PC-9 (cell line): ENCODE measurements at regions of chr10 and their contacts with region 1.

Region 1: DNA sequence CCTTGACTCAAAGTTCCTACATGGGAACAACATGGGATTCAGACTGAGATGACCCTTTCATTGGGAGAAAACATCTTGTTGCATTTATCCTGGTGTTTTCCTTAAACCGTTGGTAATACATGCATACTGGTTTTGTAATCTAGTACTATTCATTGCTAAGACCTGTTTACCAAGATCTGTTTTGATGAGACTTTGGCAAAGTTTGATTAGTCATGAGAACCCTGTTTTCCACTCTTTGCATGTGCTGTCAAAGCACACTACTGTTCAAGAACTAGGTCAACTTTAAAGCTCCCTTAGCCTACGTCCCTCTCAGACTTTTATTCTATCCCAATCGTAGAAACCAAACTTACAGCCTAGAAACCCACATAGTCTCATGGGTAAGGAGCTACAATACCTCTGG is 650.9 kb downstream of the GATA3 start:
- DNase-seq: no peak
- H3K4me3 ChIP-seq: no peak overlapping the region
- H3K27ac ChIP-seq: no peak overlapping the region
- H3K4me1 ChIP-seq: peaks cover 36% of the 10 kb centered on the region
- H3K27me3 ChIP-seq: no peaks in the 10 kb centered on the region
- CTCF ChIP-seq: no peak

Region 2: DNA sequence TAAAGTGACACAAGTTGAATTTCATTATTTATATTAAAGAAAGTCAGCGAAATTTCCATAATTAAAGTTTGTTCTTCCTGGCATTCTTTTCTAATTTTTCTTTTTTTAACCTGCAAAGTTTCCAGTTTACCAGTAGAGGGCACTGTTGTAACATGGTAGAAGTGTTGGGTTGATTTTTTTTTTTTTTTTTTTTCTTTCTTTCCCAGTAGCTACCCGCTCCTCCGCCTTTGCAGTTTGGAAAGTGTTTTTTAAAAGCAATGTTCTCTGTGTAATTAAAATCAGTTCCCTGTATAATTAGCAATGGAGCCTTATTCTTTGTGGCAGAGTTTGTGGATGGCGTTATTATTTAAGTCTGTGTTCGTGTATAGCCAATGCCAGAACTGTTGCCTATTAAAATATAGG is 833.4 kb before region 1 on chr10:
- CTCF ChIA-PET with region 1: interaction called, 3 read pairs
- POLR2A ChIA-PET with region 1: no interaction called
- intact Hi-C with region 1: loop called (anchors 10 kb)
- DNase-seq: peak in 1 of 2 experiments; percentile 5
- H3K4me3 ChIP-seq: peak overlapping the region; percentile 54; the same call in 1 of the 2 replicates
- H3K27ac ChIP-seq: no peak overlapping the region
- H3K4me1 ChIP-seq: peaks cover 8% of the 10 kb centered on the region
- H3K27me3 ChIP-seq: no peaks in the 10 kb centered on the region
- CTCF ChIP-seq: peak; percentile 74

Region 3: DNA sequence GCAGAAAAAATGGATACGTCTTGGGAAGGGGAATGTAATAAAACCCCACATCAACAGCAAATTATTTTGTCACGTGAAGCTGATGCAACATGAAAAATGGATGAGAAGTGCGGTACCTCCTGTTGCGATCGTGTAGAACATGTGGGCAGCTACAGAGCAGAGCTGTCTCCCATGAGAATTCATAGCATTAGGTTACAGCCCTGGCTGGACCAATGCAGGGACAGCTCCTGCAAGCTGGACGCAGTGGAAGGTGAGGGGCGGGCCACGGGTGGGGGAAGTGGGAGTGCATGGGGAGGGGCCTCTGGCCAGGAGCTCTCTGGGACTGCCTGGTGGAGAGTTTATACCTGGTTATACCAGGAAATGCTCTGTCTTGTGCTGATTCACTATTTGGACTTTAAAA is 530.6 kb before region 1 on chr10:
- CTCF ChIA-PET with region 1: no interaction called
- POLR2A ChIA-PET with region 1: no interaction called
- intact Hi-C with region 1: no loop called
- DNase-seq: no peak
- H3K4me3 ChIP-seq: no peak overlapping the region
- H3K27ac ChIP-seq: no peak overlapping the region
- H3K4me1 ChIP-seq: no peaks in the 10 kb centered on the region
- H3K27me3 ChIP-seq: no peaks in the 10 kb centered on the region
- CTCF ChIP-seq: no peak

Region 4: DNA sequence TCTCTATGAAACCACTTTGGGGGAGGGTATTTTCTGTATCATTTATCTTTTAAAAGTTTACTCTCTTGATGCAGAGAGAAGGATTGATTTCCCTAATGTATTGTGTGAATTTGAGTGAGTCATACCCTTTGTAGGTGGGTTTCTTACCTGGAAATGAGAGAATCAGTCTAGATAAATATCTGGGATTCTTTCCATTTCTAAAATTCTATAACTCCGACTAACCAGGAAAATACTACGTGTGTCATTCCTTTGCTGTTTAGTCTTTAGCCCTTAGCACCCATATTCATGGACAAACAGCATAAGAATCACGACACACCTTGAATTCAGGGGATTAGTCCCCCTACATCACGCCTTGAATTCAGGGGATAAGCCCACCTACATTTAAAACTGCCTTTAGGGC is 511.9 kb before region 1 on chr10:
- CTCF ChIA-PET with region 1: no interaction called
- POLR2A ChIA-PET with region 1: no interaction called
- intact Hi-C with region 1: loop called (anchors 10 kb)
- DNase-seq: peak; percentile 37 to 93
- H3K4me3 ChIP-seq: peak overlapping the region; percentile 52; the same call in 1 of the 2 replicates
- H3K27ac ChIP-seq: peak overlapping the region; percentile 99
- H3K4me1 ChIP-seq: peaks cover 32% of the 10 kb centered on the region
- H3K27me3 ChIP-seq: no peaks in the 10 kb centered on the region
- CTCF ChIP-seq: no peak

Region 5: DNA sequence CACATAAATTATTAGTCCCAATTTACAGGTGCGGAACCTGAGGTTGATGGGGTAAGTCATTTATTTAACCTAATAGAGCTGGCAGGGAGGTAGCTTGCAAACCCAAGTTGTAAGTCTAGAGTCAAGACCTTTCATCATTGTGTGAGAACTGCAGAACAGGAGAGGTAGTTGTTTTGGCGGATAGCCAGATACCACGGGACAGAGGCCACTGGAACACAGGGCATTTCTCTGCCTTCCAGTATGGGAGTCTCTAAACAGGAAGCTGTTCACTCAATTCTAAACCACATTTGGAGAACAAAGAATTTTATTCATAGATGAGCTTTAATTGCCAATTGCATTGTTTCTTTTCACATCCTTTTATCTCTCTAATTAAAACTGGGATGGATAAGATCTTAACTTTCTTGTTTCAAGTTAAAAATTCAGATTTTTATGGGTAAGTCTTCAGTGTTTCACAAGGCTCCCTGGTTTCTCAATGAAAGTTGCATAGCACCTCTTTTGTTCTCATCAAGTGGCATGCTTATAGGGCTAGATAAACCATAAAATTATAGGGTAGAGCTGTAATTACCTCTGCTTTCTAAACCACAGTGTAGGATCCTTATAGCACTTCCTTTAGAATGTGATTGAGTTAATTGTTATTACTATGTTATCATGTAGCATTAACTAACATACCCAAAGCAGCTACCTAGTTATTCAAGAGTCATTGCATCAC is 161.9 kb before region 1 on chr10:
- CTCF ChIA-PET with region 1: no interaction called
- POLR2A ChIA-PET with region 1: no interaction called
- intact Hi-C with region 1: loop called (anchors 2 kb)
- DNase-seq: peak; percentile 68 to 85
- H3K4me3 ChIP-seq: no peak overlapping the region; the same call in 1 of the 2 replicates
- H3K27ac ChIP-seq: peak overlapping the region; percentile 99
- H3K4me1 ChIP-seq: peaks cover 39% of the 10 kb centered on the region
- H3K27me3 ChIP-seq: no peaks in the 10 kb centered on the region
- CTCF ChIP-seq: no peak

Region 6: GRCh38 chr10:8628186-8628759 is 77.1 kb before region 1 on chr10:
- CTCF ChIA-PET with region 1: no interaction called
- POLR2A ChIA-PET with region 1: no interaction called
- intact Hi-C with region 1: loop called (anchors 1 kb)
- DNase-seq: peak; percentile 88 to 97
- H3K4me3 ChIP-seq: no peak overlapping the region
- H3K27ac ChIP-seq: peak overlapping the region; percentile 88
- H3K4me1 ChIP-seq: peaks cover 25% of the 10 kb centered on the region
- H3K27me3 ChIP-seq: no peaks in the 10 kb centered on the region
- CTCF ChIP-seq: no peak

Region 7: GRCh38 chr10:8873310-8873709 is 167.9 kb after region 1 on chr10:
- CTCF ChIA-PET with region 1: no interaction called
- POLR2A ChIA-PET with region 1: no interaction called
- intact Hi-C with region 1: loop called (anchors 1 kb)
- DNase-seq: peak in 1 of 2 experiments; percentile 51
- H3K4me3 ChIP-seq: no peak overlapping the region
- H3K27ac ChIP-seq: peak overlapping the region; percentile 48
- H3K4me1 ChIP-seq: peaks cover 20% of the 10 kb centered on the region
- H3K27me3 ChIP-seq: no peaks in the 10 kb centered on the region
- CTCF ChIP-seq: peak; percentile 53; the same call in 1 of the 2 replicates

Region 8: DNA sequence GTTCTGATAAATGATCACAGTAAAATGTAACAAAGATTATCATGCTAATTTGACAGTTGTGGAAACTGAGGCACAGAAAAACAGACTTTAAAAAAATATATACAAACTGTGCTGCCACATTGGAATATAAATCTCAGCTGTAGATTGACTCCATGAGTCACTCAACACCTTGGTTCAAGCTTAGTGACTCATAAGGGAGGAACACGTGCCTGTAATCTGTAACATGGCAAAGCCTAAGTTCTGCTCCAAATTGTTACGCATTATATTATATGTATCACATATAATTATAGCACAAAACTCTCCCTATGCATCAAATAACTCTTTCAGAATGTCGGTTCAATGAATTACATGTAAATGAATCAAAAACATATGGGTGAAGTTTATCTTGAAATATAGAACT is 396.6 kb after region 1 on chr10:
- CTCF ChIA-PET with region 1: no interaction called
- POLR2A ChIA-PET with region 1: no interaction called
- intact Hi-C with region 1: no loop called
- DNase-seq: no peak
- H3K4me3 ChIP-seq: no peak overlapping the region
- H3K27ac ChIP-seq: no peak overlapping the region
- H3K4me1 ChIP-seq: no peaks in the 10 kb centered on the region
- H3K27me3 ChIP-seq: no peaks in the 10 kb centered on the region
- CTCF ChIP-seq: no peak